ENCODE measurements at regions of chr14 and their contacts with region 1.

Region 1: GRCh38 chr14:50804181-50804721 is 26.7 kb downstream of the NIN start:
- DNase-seq: no peak
- H3K4me3 ChIP-seq: no peak overlapping the region
- H3K4me3 Mint-ChIP-seq: no peak overlapping the region
- H3K27ac ChIP-seq: no peak overlapping the region
- H3K27ac Mint-ChIP-seq: peak overlapping the region in 2 of 7 donors; percentile 1 to 53
- H3K4me1 ChIP-seq: peaks cover 0 to 13% of the 10 kb centered on the region in 2 donors
- H3K4me1 Mint-ChIP-seq: peaks cover 20% of the 10 kb centered on the region
- H3K27me3 ChIP-seq: no peaks in the 10 kb centered on the region
- H3K27me3 Mint-ChIP-seq: no peaks in the 10 kb centered on the region
- CTCF ChIP-seq: no peak

Region 2: GRCh38 chr14:50726372-50727107 is 77.7 kb before region 1 on chr14:
- intact Hi-C with region 1: no loop called
- DNase-seq: no peak
- H3K4me3 ChIP-seq: no peak overlapping the region
- H3K4me3 Mint-ChIP-seq: no peak overlapping the region
- H3K27ac ChIP-seq: peak overlapping the region in 1 of 2 donors; percentile 47
- H3K27ac Mint-ChIP-seq: peak overlapping the region in 2 of 7 donors; percentile 8 to 73
- H3K4me1 ChIP-seq: no peaks in the 10 kb centered on the region
- H3K4me1 Mint-ChIP-seq: peaks cover 5% of the 10 kb centered on the region
- H3K27me3 ChIP-seq: no peaks in the 10 kb centered on the region
- H3K27me3 Mint-ChIP-seq: no peaks in the 10 kb centered on the region
- CTCF ChIP-seq: no peak

Region 3: DNA sequence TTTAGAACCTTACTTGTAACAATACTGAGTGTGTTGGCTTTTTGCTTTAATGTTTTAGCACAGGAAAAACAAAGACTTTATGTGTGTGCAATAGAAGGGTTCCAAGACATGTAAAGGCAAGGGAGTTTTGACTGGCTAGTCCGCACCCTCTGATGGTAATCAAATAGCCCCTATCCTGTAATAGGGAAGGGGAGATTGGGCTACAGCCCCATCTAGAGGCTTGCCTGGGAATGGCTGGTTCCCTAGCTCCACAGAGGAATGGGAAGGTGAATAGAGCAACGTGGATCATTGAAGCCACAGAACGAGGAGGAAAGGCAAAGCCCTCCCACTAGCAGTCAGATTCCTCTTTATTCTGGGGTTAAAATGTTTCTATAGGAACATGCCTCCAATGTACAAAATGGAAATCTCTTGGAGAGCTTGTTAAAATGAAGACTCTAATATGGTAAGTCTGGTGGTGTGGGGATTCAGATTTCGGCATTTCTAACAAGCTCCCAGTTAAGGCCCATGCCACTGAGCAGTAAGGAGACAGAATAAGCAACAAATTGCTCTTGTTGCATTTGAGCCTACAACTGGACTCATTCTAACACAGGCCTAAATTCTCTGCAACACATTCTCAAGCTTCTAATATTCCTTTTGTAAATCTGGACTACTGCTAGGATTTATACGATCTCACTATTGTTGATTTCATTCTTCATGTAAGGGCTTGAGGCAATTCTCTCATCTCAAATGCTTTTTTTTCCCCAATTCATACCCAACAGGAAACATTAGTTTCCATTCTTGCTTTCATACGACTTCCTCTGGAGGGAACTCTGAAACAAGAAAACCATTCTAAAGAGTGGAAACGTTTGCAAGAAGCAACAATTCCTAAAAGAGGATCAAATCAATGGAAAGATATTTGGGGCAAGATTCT is 30.4 kb before region 1 on chr14:
- intact Hi-C with region 1: no loop called
- DNase-seq: peak in 1 of 3 donors; percentile 10
- H3K4me3 ChIP-seq: no peak overlapping the region
- H3K4me3 Mint-ChIP-seq: no peak overlapping the region
- H3K27ac ChIP-seq: peak overlapping the region in 1 of 2 donors; percentile 6
- H3K27ac Mint-ChIP-seq: peak overlapping the region in 3 of 7 donors; percentile 25 to 66 (median 32)
- H3K4me1 ChIP-seq: no peaks in the 10 kb centered on the region
- H3K4me1 Mint-ChIP-seq: peaks cover 3% of the 10 kb centered on the region
- H3K27me3 ChIP-seq: no peaks in the 10 kb centered on the region
- H3K27me3 Mint-ChIP-seq: no peaks in the 10 kb centered on the region
- CTCF ChIP-seq: peak; percentile 78

Region 4: GRCh38 chr14:50835280-50835679 is 31.0 kb after region 1 on chr14:
- intact Hi-C with region 1: loop called (anchors 5 to 10 kb)
- DNase-seq: peak in 2 of 3 donors; percentile 30 to 59
- H3K4me3 ChIP-seq: no peak overlapping the region
- H3K4me3 Mint-ChIP-seq: peak overlapping the region in 1 of 2 donors; percentile 35
- H3K27ac ChIP-seq: no peak overlapping the region
- H3K27ac Mint-ChIP-seq: no peak overlapping the region
- H3K4me1 ChIP-seq: peaks cover 13 to 14% of the 10 kb centered on the region in 2 donors
- H3K4me1 Mint-ChIP-seq: peaks cover 26% of the 10 kb centered on the region
- H3K27me3 ChIP-seq: no peaks in the 10 kb centered on the region
- H3K27me3 Mint-ChIP-seq: peaks cover 0 to 8% (median 0%) of the 10 kb centered on the region in 3 donors
- CTCF ChIP-seq: no peak

Measured in CD14-positive monocyte (primary cell).